HepG2 (cell line): ENCODE measurements at regions of chr10 and their contacts with region 1.

Region 1: DNA sequence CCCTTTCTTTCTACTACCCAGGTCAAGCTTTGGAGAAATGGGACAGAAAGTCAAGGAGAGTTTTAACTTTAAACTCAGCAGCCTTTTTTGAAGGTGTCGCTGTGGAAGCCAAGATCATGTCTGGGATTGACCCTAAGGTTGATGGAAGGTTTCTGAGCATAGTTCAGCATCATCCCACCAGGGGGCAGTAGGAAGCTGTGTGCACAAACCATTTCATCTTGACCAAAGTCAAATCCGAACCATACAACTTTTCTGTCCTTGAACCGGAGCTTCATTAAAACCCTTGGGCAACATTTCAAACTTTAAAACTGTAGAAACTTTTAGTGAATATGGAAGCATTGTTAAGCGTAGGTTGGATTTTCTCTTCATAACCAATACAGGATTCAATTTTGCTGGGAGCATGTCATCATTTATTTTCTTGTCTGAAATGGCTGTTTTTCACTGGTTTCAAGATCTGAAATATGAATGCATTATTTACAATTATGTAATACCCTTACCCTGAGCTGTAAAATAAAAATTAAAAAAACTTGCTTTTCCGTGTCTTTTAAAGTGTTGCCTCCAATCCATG is 214.4 kb upstream of the KIAA1217 start:
- DNase-seq: peak; percentile 46
- ATAC-seq: peak; percentile 85
- H3K4me3 ChIP-seq: no peak overlapping the region
- H3K27ac ChIP-seq: no peak overlapping the region
- H3K4me1 ChIP-seq: no peaks in the 10 kb centered on the region
- H3K27me3 ChIP-seq: no peaks in the 10 kb centered on the region
- CTCF ChIP-seq: peak; percentile 84
- EP300 ChIP-seq: no peak
- POLR2A ChIP-seq: no peak
- RAD21 ChIP-seq: peak; percentile 74

Region 2: DNA sequence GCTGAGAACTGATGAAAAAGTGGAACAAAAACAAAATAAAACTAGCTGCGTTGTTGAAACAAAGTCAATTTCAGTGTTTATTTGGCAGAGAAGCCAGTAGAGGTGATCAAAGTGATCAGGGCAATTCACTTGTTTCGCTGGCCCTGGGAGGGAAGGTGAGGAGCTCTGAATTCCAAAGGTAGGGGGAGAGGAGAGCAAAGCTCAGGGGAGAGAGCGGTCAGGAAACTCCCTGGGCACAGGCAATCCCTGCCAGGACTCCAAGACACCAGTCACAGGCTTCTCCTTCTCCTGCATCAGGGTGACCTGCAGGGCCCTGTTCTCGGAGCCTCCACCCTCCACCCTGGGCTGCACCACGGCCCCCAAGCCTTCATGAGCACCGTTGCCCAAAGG is 207.6 kb after region 1 on chr10:
- CTCF ChIA-PET with region 1: interaction called, 17 read pairs
- POLR2A ChIA-PET with region 1: no interaction called
- in situ Hi-C with region 1: loop called (anchors 5 kb)
- intact Hi-C with region 1: no loop called
- DNase-seq: peak; percentile 67
- ATAC-seq: peak; percentile 93
- H3K4me3 ChIP-seq: peak overlapping the region; percentile 39 to 67 (median 48); a peak in 5 of 6 replicates
- H3K27ac ChIP-seq: no peak overlapping the region
- H3K4me1 ChIP-seq: peaks cover 38% of the 10 kb centered on the region
- H3K27me3 ChIP-seq: no peaks in the 10 kb centered on the region
- CTCF ChIP-seq: no peak
- EP300 ChIP-seq: no peak
- POLR2A ChIP-seq: peak in 1 of 2 experiments; percentile 45; a peak in 1 of 4 replicates
- RAD21 ChIP-seq: no peak

Region 3: GRCh38 chr10:24324651-24325050 is 330.1 kb after region 1 on chr10:
- CTCF ChIA-PET with region 1: interaction called, 8 read pairs
- POLR2A ChIA-PET with region 1: no interaction called
- in situ Hi-C with region 1: no loop called
- intact Hi-C with region 1: loop called (anchors 1 kb)
- DNase-seq: no peak
- ATAC-seq: no peak
- H3K4me3 ChIP-seq: no peak overlapping the region
- H3K27ac ChIP-seq: no peak overlapping the region
- H3K4me1 ChIP-seq: no peaks in the 10 kb centered on the region
- H3K27me3 ChIP-seq: no peaks in the 10 kb centered on the region
- CTCF ChIP-seq: no peak
- EP300 ChIP-seq: no peak
- POLR2A ChIP-seq: no peak
- RAD21 ChIP-seq: no peak

Region 4: GRCh38 chr10:24360282-24361127 is 365.9 kb after region 1 on chr10:
- CTCF ChIA-PET with region 1: interaction called, 11 read pairs
- POLR2A ChIA-PET with region 1: no interaction called
- in situ Hi-C with region 1: loop called (anchors 5 kb)
- intact Hi-C with region 1: loop called (anchors 1 kb)
- DNase-seq: peak; percentile 50
- ATAC-seq: peak; percentile 82
- H3K4me3 ChIP-seq: no peak overlapping the region
- H3K27ac ChIP-seq: no peak overlapping the region
- H3K4me1 ChIP-seq: peaks cover 8% of the 10 kb centered on the region
- H3K27me3 ChIP-seq: no peaks in the 10 kb centered on the region
- CTCF ChIP-seq: peak; percentile 78
- EP300 ChIP-seq: no peak
- POLR2A ChIP-seq: no peak
- RAD21 ChIP-seq: peak; percentile 36; the same call in 1 of the 2 replicates

Region 5: GRCh38 chr10:24503461-24504320 is 509.1 kb after region 1 on chr10:
- CTCF ChIA-PET with region 1: interaction called, 5 read pairs
- POLR2A ChIA-PET with region 1: no interaction called
- in situ Hi-C with region 1: loop called (anchors 25 kb)
- intact Hi-C with region 1: loop called (anchors 1 kb)
- DNase-seq: peak; percentile 63
- ATAC-seq: peak; percentile 95
- H3K4me3 ChIP-seq: no peak overlapping the region
- H3K27ac ChIP-seq: no peak overlapping the region
- H3K4me1 ChIP-seq: no peaks in the 10 kb centered on the region
- H3K27me3 ChIP-seq: no peaks in the 10 kb centered on the region
- CTCF ChIP-seq: peak; percentile 77
- EP300 ChIP-seq: no peak
- POLR2A ChIP-seq: no peak
- RAD21 ChIP-seq: peak; percentile 72

Region 6: GRCh38 chr10:24518981-24519597 is 524.5 kb after region 1 on chr10:
- CTCF ChIA-PET with region 1: no interaction called
- POLR2A ChIA-PET with region 1: no interaction called
- in situ Hi-C with region 1: loop called (anchors 25 kb)
- intact Hi-C with region 1: loop called (anchors 5 kb)
- DNase-seq: peak; percentile 53
- ATAC-seq: peak; percentile 83
- H3K4me3 ChIP-seq: no peak overlapping the region
- H3K27ac ChIP-seq: peak overlapping the region; percentile 52
- H3K4me1 ChIP-seq: peaks cover 12% of the 10 kb centered on the region
- H3K27me3 ChIP-seq: no peaks in the 10 kb centered on the region
- CTCF ChIP-seq: peak; percentile 74
- EP300 ChIP-seq: no peak
- POLR2A ChIP-seq: no peak
- RAD21 ChIP-seq: 0 out of 2 replicates have a peak, but pooled peaks have one; percentile 51

Region 7: DNA sequence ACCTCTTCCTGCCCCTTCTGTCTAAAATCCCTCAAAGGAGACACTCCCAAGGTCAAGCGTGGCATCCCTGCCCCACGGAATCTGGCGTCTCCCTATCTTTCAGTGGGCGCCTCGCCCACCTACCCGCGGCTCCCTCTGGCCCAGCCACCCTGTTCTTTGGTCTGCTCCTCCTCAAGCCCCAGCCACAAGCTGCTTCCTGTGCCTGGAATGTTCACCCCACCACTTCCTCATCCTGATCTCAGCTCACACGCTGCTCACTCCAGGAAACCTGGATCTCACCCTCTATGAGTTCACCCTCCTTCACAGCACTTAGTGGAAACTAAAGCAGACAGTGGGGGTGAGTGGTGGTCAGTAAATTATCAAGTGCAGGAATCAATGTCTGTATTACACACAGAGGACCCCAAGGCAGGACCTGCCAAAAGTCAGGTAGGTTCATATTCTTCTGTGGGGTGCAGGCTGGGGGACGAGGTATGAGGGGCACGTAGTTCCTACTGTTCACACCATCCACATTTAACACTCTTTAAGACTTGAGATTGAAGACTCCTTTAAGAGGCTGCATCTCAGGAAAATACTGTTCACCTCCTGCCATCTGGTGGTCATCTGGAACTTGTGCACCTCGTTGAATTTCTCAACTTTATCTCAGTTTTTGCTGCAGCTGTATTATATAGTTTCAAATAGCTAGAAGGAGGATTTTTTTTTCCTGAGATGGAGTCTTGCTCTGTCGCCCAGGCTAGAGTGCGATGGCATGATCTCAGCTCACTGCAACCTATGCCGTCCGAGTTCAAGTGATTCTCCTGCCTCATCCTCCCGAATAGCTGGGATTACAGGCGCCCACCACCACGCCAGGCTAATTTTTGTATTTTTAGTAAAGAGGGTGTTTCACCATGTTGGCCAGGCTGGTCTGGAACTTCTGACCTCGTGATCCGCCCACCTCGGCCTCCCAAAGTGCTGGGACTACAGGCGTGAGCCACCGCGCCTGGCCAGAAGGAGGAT is 562.5 kb after region 1 on chr10:
- CTCF ChIA-PET with region 1: interaction called, 3 read pairs
- POLR2A ChIA-PET with region 1: no interaction called
- in situ Hi-C with region 1: no loop called
- intact Hi-C with region 1: loop called (anchors 5 kb)
- DNase-seq: peak; percentile 43
- ATAC-seq: peak; percentile 37
- H3K4me3 ChIP-seq: 0 out of 6 replicates have a peak overlapping the region, but pooled peaks of 1 of the 3 experiments have one; percentile 8
- H3K27ac ChIP-seq: no peak overlapping the region
- H3K4me1 ChIP-seq: peaks cover 42% of the 10 kb centered on the region
- H3K27me3 ChIP-seq: no peaks in the 10 kb centered on the region
- CTCF ChIP-seq: peak; percentile 82
- EP300 ChIP-seq: no peak
- POLR2A ChIP-seq: no peak
- RAD21 ChIP-seq: peak; percentile 64